ENCODE measurements at regions of chr1 and their contacts with region 1.

Region 1: DNA sequence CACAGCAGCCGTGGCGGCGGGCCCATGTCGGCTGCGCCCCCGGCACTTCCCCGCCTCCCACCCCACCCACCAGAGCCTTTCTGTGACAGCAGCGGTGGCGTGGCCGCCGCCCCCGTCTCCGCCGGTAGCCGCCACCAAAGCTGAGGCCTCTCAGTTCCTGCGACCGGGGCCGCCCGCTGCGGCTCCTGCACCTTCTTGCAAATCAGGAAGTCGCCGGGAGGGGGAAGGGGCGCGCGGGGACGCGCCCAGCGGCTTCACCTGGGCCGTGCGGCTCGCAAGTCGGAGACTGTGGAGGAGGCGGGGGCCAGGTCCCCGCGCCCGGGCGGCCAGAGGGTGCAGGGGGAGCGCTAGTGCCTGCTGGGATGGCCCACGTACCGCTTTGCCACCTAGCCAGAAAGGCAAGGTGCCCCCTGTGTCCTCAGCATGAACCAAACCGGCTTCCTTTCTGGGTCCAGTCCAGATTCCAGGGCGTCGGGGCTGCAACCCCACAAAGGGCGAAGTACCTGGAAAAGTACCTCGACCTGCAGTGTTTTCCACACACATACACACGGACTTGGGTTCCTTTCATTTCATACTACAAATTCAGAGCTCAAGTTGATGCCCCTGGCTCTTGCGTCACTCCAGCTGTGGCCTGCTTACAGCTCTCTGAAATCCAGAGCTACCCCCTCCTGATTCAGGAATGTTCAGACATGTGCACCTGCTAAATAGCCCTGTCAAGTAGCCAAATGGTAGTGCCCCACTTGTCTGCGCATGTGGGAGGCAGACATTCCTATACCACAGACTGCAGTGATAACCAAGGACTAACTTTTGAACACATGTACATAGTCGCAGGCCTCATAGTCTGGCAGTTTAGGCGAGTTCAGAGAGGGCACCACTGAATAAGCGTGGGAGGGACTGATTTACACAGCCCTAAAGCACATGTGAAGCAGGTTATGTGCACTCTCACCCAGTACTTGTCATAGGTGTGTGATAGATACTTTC is at the start of gene DENND1B:
- DNase-seq: peak; percentile 56 to 90 (median 83)
- ATAC-seq: peak; percentile 55
- H3K4me3 ChIP-seq: peak within 1 kb of the TSS; percentile 62 to 71
- H3K4me3 Mint-ChIP-seq: peak within 1 kb of the TSS; percentile 83
- H3K27ac ChIP-seq: peak within 1 kb of the TSS; percentile 61 to 88
- H3K27ac Mint-ChIP-seq: peak within 1 kb of the TSS; percentile 97
- H3K4me1 ChIP-seq: peaks cover 33% of the 10 kb centered on the region
- H3K4me1 Mint-ChIP-seq: peaks cover 66% of the 10 kb centered on the region
- H3K27me3 ChIP-seq: no peaks in the 10 kb centered on the region
- H3K27me3 Mint-ChIP-seq: no peaks in the 10 kb centered on the region
- CTCF ChIP-seq: no peak
- total RNA-seq, gene DENND1B: 17.6 to 19.6 TPM

Region 2: GRCh38 chr1:197706601-197707000 is 69.0 kb before region 1 on chr1:
- CTCF ChIA-PET with region 1: no interaction called
- POLR2A ChIA-PET with region 1: no interaction called
- intact Hi-C with region 1: no loop called
- DNase-seq: peak in 1 of 9 experiments; percentile 5
- ATAC-seq: no peak
- H3K4me3 ChIP-seq: no peak overlapping the region
- H3K4me3 Mint-ChIP-seq: no peak overlapping the region
- H3K27ac ChIP-seq: no peak overlapping the region
- H3K27ac Mint-ChIP-seq: no peak overlapping the region
- H3K4me1 ChIP-seq: no peaks in the 10 kb centered on the region
- H3K4me1 Mint-ChIP-seq: peaks cover 12% of the 10 kb centered on the region
- H3K27me3 ChIP-seq: no peaks in the 10 kb centered on the region
- H3K27me3 Mint-ChIP-seq: no peaks in the 10 kb centered on the region
- CTCF ChIP-seq: no peak

Region 3: GRCh38 chr1:197761621-197762020 is 14.0 kb before region 1 on chr1:
- CTCF ChIA-PET with region 1: interaction called, 5 read pairs
- POLR2A ChIA-PET with region 1: interaction called, 4 read pairs
- intact Hi-C with region 1: loop called in 1 of 2 experiments (anchors 2 kb)
- DNase-seq: no peak
- ATAC-seq: no peak
- H3K4me3 ChIP-seq: no peak overlapping the region
- H3K4me3 Mint-ChIP-seq: no peak overlapping the region
- H3K27ac ChIP-seq: no peak overlapping the region
- H3K27ac Mint-ChIP-seq: no peak overlapping the region
- H3K4me1 ChIP-seq: no peaks in the 10 kb centered on the region
- H3K4me1 Mint-ChIP-seq: peaks cover 49% of the 10 kb centered on the region
- H3K27me3 ChIP-seq: no peaks in the 10 kb centered on the region
- H3K27me3 Mint-ChIP-seq: no peaks in the 10 kb centered on the region
- CTCF ChIP-seq: no peak

Region 4: GRCh38 chr1:197902454-197903195 is 127.1 kb after region 1 on chr1 and contains the start of gene C1orf53:
- CTCF ChIA-PET with region 1: no interaction called
- POLR2A ChIA-PET with region 1: interaction called, 4 read pairs
- intact Hi-C with region 1: loop called (anchors 2 to 5 kb)
- DNase-seq: peak; percentile 35 to 86 (median 66)
- ATAC-seq: peak; percentile 89
- H3K4me3 ChIP-seq: peak within 1 kb of the TSS; percentile 66 to 75
- H3K4me3 Mint-ChIP-seq: peak within 1 kb of the TSS; percentile 97
- H3K27ac ChIP-seq: peak within 1 kb of the TSS; percentile 40 to 49
- H3K27ac Mint-ChIP-seq: peak within 1 kb of the TSS; percentile 76
- H3K4me1 ChIP-seq: peaks cover 13% of the 10 kb centered on the region
- H3K4me1 Mint-ChIP-seq: peaks cover 12% of the 10 kb centered on the region
- H3K27me3 ChIP-seq: peaks cover 11 to 16% of the 10 kb centered on the region in 2 experiments
- H3K27me3 Mint-ChIP-seq: peaks cover 51% of the 10 kb centered on the region
- CTCF ChIP-seq: no peak
- total RNA-seq, gene C1orf53: not detected

Region 5: GRCh38 chr1:198699167-198700015 is 923.8 kb after region 1 on chr1:
- CTCF ChIA-PET with region 1: no interaction called
- POLR2A ChIA-PET with region 1: no interaction called
- intact Hi-C with region 1: loop called (anchors 10 kb)
- DNase-seq: peak; percentile 45 to 82 (median 73)
- ATAC-seq: peak; percentile 86
- H3K4me3 ChIP-seq: no peak overlapping the region
- H3K4me3 Mint-ChIP-seq: peak overlapping the region; percentile 8
- H3K27ac ChIP-seq: no peak overlapping the region
- H3K27ac Mint-ChIP-seq: peak overlapping the region; percentile 72
- H3K4me1 ChIP-seq: peaks cover 71% of the 10 kb centered on the region
- H3K4me1 Mint-ChIP-seq: peaks cover 83% of the 10 kb centered on the region
- H3K27me3 ChIP-seq: no peaks in the 10 kb centered on the region
- H3K27me3 Mint-ChIP-seq: no peaks in the 10 kb centered on the region
- CTCF ChIP-seq: peak; percentile 52

Region 6: DNA sequence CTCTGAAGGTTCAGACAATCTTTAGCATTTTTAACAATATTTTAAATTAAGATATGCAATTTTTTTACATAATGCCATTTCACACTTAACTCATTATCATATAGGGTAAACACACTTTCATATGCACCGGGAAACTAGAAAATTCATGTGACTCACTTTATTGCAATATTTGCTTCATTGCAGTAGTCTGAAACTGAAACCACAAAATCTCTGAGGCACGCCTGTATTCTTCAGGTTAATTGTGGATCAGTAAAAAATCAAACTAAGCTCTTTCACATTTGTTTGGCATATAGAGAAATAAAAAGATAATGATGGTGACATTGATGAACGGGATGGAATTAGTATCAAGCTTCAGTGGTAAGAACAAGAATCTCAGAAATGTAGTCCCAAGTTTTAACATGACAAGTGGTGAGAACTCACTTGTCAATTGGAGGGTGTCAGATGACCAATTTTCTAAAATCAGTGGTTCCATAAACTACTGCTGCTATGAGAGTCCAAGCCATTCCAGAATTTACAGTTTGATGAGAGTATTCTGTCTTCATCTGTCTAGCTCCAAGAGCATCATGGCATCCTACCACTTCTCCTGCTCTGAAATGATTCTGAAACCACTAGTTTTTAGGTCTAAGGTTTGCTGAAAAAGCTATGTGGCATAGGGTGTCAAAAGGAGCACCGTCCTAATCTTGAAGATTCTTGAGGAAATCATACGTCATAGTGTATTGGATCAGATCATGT is 1144.3 kb after region 1 on chr1:
- CTCF ChIA-PET with region 1: no interaction called
- POLR2A ChIA-PET with region 1: no interaction called
- intact Hi-C with region 1: loop called in 1 of 2 experiments (anchors 10 kb)
- DNase-seq: peak in 2 of 9 experiments; percentile 18 to 57
- ATAC-seq: peak; percentile 78
- H3K4me3 ChIP-seq: no peak overlapping the region
- H3K4me3 Mint-ChIP-seq: peak overlapping the region; percentile 79
- H3K27ac ChIP-seq: peak overlapping the region in 1 of 2 experiments; percentile 58
- H3K27ac Mint-ChIP-seq: peak overlapping the region; percentile 85
- H3K4me1 ChIP-seq: peaks cover 16% of the 10 kb centered on the region
- H3K4me1 Mint-ChIP-seq: peaks cover 73% of the 10 kb centered on the region
- H3K27me3 ChIP-seq: no peaks in the 10 kb centered on the region
- H3K27me3 Mint-ChIP-seq: no peaks in the 10 kb centered on the region
- CTCF ChIP-seq: no peak

Region 7: GRCh38 chr1:198937231-198938031 is 1161.9 kb after region 1 on chr1:
- CTCF ChIA-PET with region 1: no interaction called
- POLR2A ChIA-PET with region 1: no interaction called
- intact Hi-C with region 1: loop called in 1 of 2 experiments (anchors 10 kb)
- DNase-seq: peak in 8 of 9 experiments; percentile 15 to 86 (median 33)
- ATAC-seq: peak; percentile 84
- H3K4me3 ChIP-seq: peak overlapping the region; percentile 42 to 59
- H3K4me3 Mint-ChIP-seq: peak overlapping the region; percentile 87
- H3K27ac ChIP-seq: peak overlapping the region; percentile 39 to 60
- H3K27ac Mint-ChIP-seq: peak overlapping the region; percentile 91
- H3K4me1 ChIP-seq: peaks cover 28% of the 10 kb centered on the region
- H3K4me1 Mint-ChIP-seq: peaks cover 25% of the 10 kb centered on the region
- H3K27me3 ChIP-seq: no peaks in the 10 kb centered on the region
- H3K27me3 Mint-ChIP-seq: no peaks in the 10 kb centered on the region
- CTCF ChIP-seq: no peak